Naive thymus-derived CD4-positive, alpha-beta T cell (primary cell): ENCODE measurements at regions of chr2 and their contacts with region 1.

Region 1: GRCh38 chr2:105858868-105859693 is 114.4 kb downstream of the NCK2 start:
- DNase-seq: peak in 1 of 9 donors; percentile 45
- ATAC-seq: no peak
- H3K4me3 ChIP-seq: no peak overlapping the region
- H3K4me3 Mint-ChIP-seq: peak overlapping the region; percentile 49 to 91 (median 80)
- H3K27ac ChIP-seq: peak overlapping the region; percentile 66
- H3K27ac Mint-ChIP-seq: peak overlapping the region; percentile 80 to 98 (median 92)
- H3K4me1 ChIP-seq: peaks cover 71 to 91% of the 10 kb centered on the region in 2 donors
- H3K4me1 Mint-ChIP-seq: peaks cover 54 to 97% (median 94%) of the 10 kb centered on the region in 7 donors
- H3K27me3 ChIP-seq: no peaks in the 10 kb centered on the region
- H3K27me3 Mint-ChIP-seq: no peaks in the 10 kb centered on the region

Region 2: GRCh38 chr2:105487142-105488069 is 371.7 kb before region 1 on chr2:
- CTCF ChIA-PET with region 1: no interaction called
- POLR2A ChIA-PET with region 1: no interaction called
- intact Hi-C with region 1: no loop called
- DNase-seq: no peak
- ATAC-seq: no peak
- H3K4me3 ChIP-seq: no peak overlapping the region
- H3K4me3 Mint-ChIP-seq: no peak overlapping the region
- H3K27ac ChIP-seq: no peak overlapping the region
- H3K27ac Mint-ChIP-seq: no peak overlapping the region
- H3K4me1 ChIP-seq: no peaks in the 10 kb centered on the region
- H3K4me1 Mint-ChIP-seq: no peaks in the 10 kb centered on the region
- H3K27me3 ChIP-seq: no peaks in the 10 kb centered on the region
- H3K27me3 Mint-ChIP-seq: peaks cover 0 to 9% (median 0%) of the 10 kb centered on the region in 5 donors

Region 3: DNA sequence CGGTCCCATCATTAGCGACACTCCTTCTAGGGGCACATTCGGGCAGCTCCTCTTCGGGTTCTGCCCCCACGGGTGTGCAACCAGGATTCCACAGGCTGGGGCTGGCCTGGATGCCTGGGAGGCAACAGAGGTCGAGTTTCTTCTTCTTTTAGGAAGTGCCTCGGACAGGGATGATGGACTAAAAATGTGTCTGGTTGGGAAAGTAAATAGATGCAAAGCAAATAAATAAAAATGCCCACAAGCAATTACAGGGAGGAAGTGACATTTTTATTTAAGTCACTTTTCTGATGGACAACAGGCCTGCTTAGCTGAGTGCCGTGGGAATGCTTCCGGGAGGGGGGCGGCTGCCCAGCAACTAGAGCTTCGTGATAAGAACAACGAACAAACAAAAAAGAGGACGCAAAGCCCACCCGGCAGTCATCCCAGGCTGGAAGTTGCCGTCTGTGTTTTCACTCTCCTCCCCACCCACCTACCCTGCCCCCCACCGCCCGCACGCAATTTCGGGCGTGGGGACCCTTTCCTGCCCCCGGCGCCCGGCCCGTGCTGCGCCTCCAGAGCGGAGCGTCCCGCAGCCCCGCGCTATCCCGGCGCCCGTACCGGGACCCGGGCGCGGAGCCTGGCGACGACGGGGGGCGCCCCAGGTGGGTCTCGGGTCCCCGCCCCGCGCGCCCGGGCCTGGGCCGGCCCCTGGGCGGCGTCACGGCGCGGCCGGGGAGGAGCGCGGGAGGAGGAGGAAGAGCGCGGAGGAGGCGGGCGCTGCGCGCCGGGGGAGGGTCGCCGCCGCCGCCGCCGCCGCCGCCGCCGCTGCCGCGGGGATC is 114.8 kb before region 1 on chr2:
- CTCF ChIA-PET with region 1: no interaction called
- POLR2A ChIA-PET with region 1: interaction called, 4 read pairs
- intact Hi-C with region 1: loop called in 1 of 2 experiments (anchors 2 kb)
- DNase-seq: peak; percentile 57 to 79 (median 69)
- ATAC-seq: peak; percentile 87
- H3K4me3 ChIP-seq: peak overlapping the region; percentile 24
- H3K4me3 Mint-ChIP-seq: peak overlapping the region; percentile 76 to 96 (median 90)
- H3K27ac ChIP-seq: peak overlapping the region; percentile 80
- H3K27ac Mint-ChIP-seq: peak overlapping the region; percentile 90 to 96 (median 95)
- H3K4me1 ChIP-seq: peaks cover 48 to 54% of the 10 kb centered on the region in 2 donors
- H3K4me1 Mint-ChIP-seq: peaks cover 49 to 82% (median 77%) of the 10 kb centered on the region in 7 donors
- H3K27me3 ChIP-seq: no peaks in the 10 kb centered on the region
- H3K27me3 Mint-ChIP-seq: no peaks in the 10 kb centered on the region

Region 4: DNA sequence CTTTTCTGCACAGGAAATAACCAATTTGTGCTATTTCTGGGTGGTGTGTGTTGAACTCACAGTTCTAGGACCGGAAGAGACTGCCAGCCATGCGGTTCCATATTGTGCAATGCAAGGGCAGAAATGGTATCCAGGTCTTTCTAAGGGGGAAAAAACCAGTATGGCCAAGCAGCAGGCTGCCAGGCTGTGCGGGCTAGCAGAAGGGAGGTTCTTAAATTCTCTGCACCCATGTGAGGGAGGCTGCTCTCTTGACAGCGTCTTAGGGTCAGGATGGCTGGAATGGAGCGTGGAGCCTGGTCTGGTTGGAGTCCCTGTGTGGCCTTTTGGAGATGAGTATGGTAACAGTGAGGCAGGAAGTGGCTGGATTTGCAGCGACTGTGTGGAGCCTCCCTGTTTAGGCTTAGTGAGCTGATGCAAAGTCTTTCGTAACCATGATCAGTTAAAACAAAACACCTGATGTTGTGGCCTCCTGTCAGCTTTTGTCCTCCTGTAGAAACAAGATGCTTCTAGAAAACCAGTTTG is 61.7 kb before region 1 on chr2:
- CTCF ChIA-PET with region 1: no interaction called
- POLR2A ChIA-PET with region 1: interaction called, 5 read pairs
- intact Hi-C with region 1: loop called (anchors 1 to 2 kb)
- DNase-seq: peak in 6 of 9 donors; percentile 37 to 58 (median 48)
- ATAC-seq: peak; percentile 33
- H3K4me3 ChIP-seq: peak overlapping the region; percentile 34
- H3K4me3 Mint-ChIP-seq: peak overlapping the region; percentile 70 to 92 (median 78)
- H3K27ac ChIP-seq: peak overlapping the region; percentile 74
- H3K27ac Mint-ChIP-seq: peak overlapping the region; percentile 92 to 100 (median 99)
- H3K4me1 ChIP-seq: peaks cover 92 to 93% of the 10 kb centered on the region in 2 donors
- H3K4me1 Mint-ChIP-seq: peaks cover 74 to 100% (median 94%) of the 10 kb centered on the region in 7 donors
- H3K27me3 ChIP-seq: no peaks in the 10 kb centered on the region
- H3K27me3 Mint-ChIP-seq: no peaks in the 10 kb centered on the region

Region 5: GRCh38 chr2:105843476-105844374 is 15.4 kb before region 1 on chr2:
- CTCF ChIA-PET with region 1: interaction called, 3 read pairs
- POLR2A ChIA-PET with region 1: interaction called, 5 read pairs
- intact Hi-C with region 1: loop called in 1 of 2 experiments (anchors 2 kb)
- DNase-seq: no peak
- ATAC-seq: no peak
- H3K4me3 ChIP-seq: no peak overlapping the region
- H3K4me3 Mint-ChIP-seq: peak overlapping the region in 7 of 10 donors; percentile 8 to 52 (median 44)
- H3K27ac ChIP-seq: no peak overlapping the region
- H3K27ac Mint-ChIP-seq: peak overlapping the region; percentile 26 to 83 (median 72)
- H3K4me1 ChIP-seq: peaks cover 47 to 55% of the 10 kb centered on the region in 2 donors
- H3K4me1 Mint-ChIP-seq: peaks cover 62 to 98% (median 90%) of the 10 kb centered on the region in 7 donors
- H3K27me3 ChIP-seq: no peaks in the 10 kb centered on the region
- H3K27me3 Mint-ChIP-seq: no peaks in the 10 kb centered on the region

Region 6: DNA sequence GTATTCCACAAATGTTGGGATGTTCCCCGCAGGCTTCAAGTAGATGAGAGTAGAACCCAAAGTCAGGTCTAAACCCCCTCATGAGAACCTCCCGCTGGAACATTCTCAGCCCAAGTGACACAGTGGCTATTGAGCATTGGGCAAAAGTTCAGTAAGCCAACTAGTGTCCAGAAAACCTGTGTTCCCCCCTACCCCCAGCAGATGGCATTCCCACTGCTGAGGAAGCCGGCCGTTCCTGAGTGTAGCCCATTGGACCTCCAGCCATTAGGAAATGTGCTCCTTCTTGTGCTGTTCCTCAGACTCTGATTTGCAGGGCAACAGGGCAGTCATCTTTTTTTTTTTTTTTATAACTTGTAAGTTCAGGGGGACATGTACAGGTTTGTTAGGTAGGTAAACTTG is 37.7 kb after region 1 on chr2:
- CTCF ChIA-PET with region 1: no interaction called
- POLR2A ChIA-PET with region 1: no interaction called
- intact Hi-C with region 1: loop called in 1 of 2 experiments (anchors 5 kb)
- DNase-seq: no peak
- ATAC-seq: no peak
- H3K4me3 ChIP-seq: no peak overlapping the region
- H3K4me3 Mint-ChIP-seq: peak overlapping the region in 2 of 10 donors; percentile 13 to 52
- H3K27ac ChIP-seq: no peak overlapping the region
- H3K27ac Mint-ChIP-seq: peak overlapping the region in 7 of 9 donors; percentile 83 to 92 (median 88)
- H3K4me1 ChIP-seq: peaks cover 11 to 20% of the 10 kb centered on the region in 2 donors
- H3K4me1 Mint-ChIP-seq: peaks cover 17 to 80% (median 60%) of the 10 kb centered on the region in 7 donors
- H3K27me3 ChIP-seq: no peaks in the 10 kb centered on the region
- H3K27me3 Mint-ChIP-seq: no peaks in the 10 kb centered on the region